Activated naive CD4-positive, alpha-beta T cell treated with anti-CD3 and anti-CD28 coated beads for 36 hours (primary cell): ENCODE measurements at regions of chr10 and their contacts with region 1.

Region 1: DNA sequence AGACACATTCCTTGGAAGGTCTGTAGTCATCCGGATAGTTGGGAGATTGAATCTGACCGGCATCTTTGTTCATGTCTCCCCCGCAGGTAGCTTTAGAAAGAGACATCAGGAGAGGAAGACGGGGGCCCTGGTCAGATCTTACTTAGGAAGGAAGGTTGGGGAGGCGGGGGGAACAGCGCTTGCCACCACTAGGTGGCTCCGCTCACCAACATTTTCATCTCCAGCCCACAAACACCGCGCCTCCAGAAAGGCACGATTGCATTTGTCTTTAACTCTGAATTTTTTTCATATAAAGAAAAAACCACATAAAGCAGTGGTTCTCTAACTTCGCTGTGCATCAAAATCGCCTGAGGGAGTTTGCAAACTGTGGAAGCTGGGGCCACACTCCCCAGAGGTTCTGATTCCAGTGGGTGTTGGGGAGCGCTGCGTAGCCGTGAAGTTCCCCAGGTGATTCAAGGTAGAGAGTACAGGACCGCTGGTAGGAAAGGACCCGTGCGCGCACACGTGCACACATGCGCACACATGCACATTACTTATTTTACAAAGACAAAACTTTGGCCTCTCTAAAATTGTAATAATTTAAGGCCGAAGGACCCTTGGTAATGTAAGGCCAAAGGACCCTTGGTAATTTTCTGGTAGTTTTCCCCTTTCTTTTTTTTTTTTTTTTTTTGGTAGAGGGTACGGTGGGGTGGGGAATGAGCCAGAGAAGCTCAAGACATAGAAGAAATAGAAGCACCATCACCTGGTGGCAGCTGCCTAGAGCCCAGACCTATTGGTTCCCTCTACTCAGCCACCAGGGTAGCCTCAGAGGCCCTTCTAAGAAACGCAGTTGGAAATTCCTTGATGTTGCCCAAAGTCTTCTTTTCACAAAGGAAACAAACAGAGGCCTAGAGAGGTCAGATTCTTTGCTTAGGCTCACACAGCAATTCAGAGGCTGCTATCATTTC is 37.4 kb upstream of the OPALIN start:
- DNase-seq: peak; percentile 75
- H3K4me3 Mint-ChIP-seq: peak overlapping the region; percentile 28
- H3K27ac Mint-ChIP-seq: no peak overlapping the region
- H3K4me1 Mint-ChIP-seq: no peaks in the 10 kb centered on the region
- H3K27me3 Mint-ChIP-seq: peaks cover 15% of the 10 kb centered on the region

Region 2: DNA sequence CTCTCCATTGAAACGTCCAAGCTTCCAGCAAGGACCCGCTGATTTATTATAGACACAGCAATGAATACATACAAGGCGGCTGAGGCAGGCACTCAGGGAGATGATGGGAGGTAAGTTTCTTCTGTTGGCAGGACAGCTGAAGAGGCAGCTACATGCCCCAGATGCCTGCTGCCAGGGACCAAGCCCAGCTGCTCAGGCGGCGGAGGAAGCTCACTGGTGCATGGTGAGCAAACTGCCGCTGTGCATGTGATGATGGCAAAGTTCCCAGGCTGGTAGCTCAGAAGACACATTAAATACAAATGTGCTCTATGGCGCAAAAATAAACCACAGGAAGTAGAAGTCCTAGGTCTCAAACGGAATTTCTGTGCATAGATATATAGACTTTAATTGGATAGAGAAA is 89.7 kb before region 1 on chr10:
- CTCF ChIA-PET with region 1: no interaction called
- intact Hi-C with region 1: no loop called
- DNase-seq: peak; percentile 34
- H3K4me3 Mint-ChIP-seq: peak overlapping the region; percentile 20
- H3K27ac Mint-ChIP-seq: no peak overlapping the region
- H3K4me1 Mint-ChIP-seq: peaks cover 24% of the 10 kb centered on the region
- H3K27me3 Mint-ChIP-seq: peaks cover 7% of the 10 kb centered on the region

Region 3: GRCh38 chr10:96374985-96375830 is 21.0 kb before region 1 on chr10:
- CTCF ChIA-PET with region 1: interaction called, 20 read pairs
- intact Hi-C with region 1: loop called (anchors 1 kb)
- DNase-seq: peak; percentile 89
- H3K4me3 Mint-ChIP-seq: peak overlapping the region; percentile 74
- H3K27ac Mint-ChIP-seq: no peak overlapping the region
- H3K4me1 Mint-ChIP-seq: peaks cover 6% of the 10 kb centered on the region
- H3K27me3 Mint-ChIP-seq: peaks cover 3% of the 10 kb centered on the region

Region 4: DNA sequence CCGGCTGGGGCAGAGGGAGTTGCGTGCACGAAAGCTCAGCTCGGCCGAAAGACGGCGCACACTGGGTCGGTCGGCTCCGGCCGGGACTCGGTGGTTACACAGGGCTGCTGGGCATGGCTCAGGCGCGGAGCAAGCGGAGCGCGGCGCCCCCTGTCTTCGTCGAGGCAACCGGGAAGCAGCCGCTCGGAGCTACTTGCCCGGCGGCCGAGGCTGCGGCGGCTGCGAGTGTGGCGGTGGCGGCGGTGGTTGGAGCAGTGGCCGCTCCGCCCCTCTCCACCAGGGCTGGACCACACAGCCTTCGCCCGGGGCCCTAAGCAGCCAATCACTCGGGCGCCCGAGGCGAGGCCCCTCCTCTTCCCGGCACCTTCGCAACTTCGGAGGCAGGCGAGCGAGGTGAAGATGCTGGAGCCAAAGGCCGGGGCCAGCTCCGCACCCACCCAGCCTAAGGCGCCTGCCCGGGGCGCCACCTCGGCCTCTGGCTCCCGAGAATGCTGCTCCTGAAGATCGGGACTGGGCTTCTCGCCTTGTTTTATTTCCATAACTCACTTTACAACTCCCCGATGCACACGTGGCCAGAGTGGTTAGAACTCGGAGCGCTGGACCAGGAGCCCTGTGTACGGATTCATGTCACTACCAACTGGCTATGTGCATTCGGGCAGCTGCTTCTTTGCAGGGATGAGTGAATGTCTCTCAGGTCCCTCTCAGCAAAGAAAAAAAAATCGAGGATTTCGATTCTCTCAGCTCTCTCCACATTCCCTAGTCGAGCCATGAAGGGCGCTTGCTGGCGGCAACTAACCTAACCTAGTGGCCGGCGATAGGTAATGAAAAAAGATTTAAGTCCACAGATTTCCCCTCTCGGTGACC is 117.7 kb after region 1 on chr10 and contains the start of gene TLL2:
- CTCF ChIA-PET with region 1: interaction called, 6 read pairs
- intact Hi-C with region 1: loop called (anchors 1 kb)
- DNase-seq: peak; percentile 69
- H3K4me3 Mint-ChIP-seq: peak within 1 kb of the TSS; percentile 61
- H3K27ac Mint-ChIP-seq: no peak within 1 kb of the TSS
- H3K4me1 Mint-ChIP-seq: peaks cover 14% of the 10 kb centered on the region
- H3K27me3 Mint-ChIP-seq: peaks cover 44% of the 10 kb centered on the region
- total RNA-seq, gene TLL2: 0.07 TPM in 1 of 2 experiments, not detected in the other

Region 5: DNA sequence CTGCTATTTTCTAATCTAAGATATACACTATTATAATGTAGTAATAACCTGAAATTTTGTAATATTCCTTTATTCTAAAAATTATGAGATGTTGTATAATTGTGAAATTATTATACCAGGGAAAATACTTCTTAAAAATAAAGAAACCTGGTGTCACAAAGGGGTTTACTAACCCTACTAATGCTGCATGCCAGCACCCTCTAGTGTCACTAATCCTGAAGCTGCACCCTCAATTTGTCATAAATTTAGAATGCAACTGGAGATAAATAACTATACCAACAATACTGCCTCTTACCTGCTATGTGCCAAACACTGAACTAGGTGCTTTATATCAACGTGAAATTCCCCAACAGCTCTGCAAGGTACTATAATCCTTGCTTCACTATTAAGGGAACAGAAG is 159.8 kb after region 1 on chr10:
- CTCF ChIA-PET with region 1: interaction called, 5 read pairs
- intact Hi-C with region 1: loop called (anchors 1 kb)
- DNase-seq: peak; percentile 7
- H3K4me3 Mint-ChIP-seq: no peak overlapping the region
- H3K27ac Mint-ChIP-seq: no peak overlapping the region
- H3K4me1 Mint-ChIP-seq: no peaks in the 10 kb centered on the region
- H3K27me3 Mint-ChIP-seq: no peaks in the 10 kb centered on the region

Region 6: GRCh38 chr10:96719850-96720421 is 323.7 kb after region 1 on chr10:
- CTCF ChIA-PET with region 1: no interaction called
- intact Hi-C with region 1: loop called (anchors 1 kb)
- DNase-seq: peak; percentile 64
- H3K4me3 Mint-ChIP-seq: peak overlapping the region; percentile 84
- H3K27ac Mint-ChIP-seq: peak overlapping the region; percentile 22
- H3K4me1 Mint-ChIP-seq: peaks cover 6% of the 10 kb centered on the region
- H3K27me3 Mint-ChIP-seq: peaks cover 3% of the 10 kb centered on the region